Activated CD8-positive, alpha-beta T cell treated with anti-CD3 and anti-CD28 coated beads, Interleukin-2, amount 10 ng/mL, durations not matched to agents 7 days and 5 days (primary cell): ENCODE measurements at regions of chr1 and their contacts with region 1.

Region 1: DNA sequence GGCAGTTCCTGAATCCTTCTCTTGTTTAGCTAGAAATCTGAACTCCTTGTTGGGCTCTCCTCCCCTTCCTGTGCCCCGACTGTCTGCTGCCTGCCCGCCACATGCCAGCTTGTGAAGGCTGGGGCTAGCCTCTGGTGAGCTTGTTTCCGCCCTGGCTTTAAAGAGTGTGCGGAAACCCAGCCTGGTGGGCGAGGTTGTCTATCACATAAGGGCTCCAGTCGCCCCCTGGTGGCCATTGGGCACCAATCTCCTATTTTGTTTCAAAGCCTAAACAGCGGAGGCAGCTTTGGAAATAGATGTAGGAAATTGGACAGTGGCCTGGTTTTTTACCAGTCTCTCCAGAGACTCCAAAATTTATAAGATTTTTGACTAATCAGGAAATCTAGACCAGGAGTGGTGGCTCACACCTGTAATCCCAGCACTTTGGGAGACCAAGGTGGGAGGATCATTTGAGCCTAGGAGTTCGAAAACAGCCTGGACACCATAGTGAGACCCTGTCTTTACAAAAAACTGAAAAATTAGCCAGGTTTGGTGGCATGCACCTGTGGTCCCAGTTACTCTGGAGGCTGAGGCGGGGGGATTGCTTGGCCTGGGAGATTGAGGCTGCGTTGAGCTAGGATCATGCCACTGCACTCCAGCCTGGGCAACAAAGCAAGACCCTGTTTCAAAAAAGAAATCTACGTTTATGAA is 9.8 kb downstream of the ATP8B2 start:
- DNase-seq: peak; percentile 95
- ATAC-seq: peak; percentile 90
- H3K4me3 Mint-ChIP-seq: peak overlapping the region; percentile 47
- H3K27ac Mint-ChIP-seq: peak overlapping the region; percentile 89
- H3K4me1 Mint-ChIP-seq: peaks cover 79% of the 10 kb centered on the region
- H3K27me3 Mint-ChIP-seq: no peaks in the 10 kb centered on the region

Region 2: DNA sequence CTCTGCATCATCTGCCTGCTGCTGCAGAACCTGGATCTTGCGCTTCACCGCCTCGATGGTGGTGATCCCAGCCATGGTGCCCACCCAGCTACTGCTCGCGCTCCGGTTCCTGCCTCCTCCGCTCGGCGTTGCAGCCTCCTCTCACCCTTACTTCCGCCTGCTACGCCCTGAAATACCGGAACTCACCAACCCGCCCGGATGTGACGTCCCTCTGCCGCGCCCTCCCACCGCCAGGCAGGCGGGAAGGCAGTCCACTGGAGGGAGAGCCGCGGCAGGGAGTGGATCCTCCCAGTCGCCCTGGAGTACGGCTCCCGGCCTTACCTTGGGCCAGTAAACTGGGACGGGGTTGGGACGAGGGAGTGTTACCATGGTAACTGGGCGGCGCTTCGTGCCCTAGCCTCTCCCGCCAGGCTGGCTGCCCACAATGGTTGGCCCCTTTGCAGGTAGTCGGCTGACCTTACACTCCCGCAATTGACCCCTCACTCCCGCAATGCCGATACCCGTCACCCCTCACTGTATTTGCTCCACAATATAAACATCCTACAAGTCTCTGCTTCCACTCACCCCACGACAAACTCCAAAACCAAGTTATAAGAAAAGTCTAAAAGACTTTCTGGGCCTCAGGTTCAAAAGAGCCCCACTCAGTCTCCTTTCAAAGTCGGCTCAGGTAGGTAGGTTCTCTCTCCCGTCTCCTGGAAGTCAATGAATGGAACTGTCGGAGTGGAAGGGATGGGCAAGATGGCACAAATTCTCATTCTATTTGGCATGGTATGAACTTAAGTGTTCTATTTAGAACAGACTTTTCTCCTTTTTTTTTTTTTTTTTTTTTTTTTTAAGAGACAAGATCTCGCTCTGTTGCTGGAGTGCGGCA is 151.9 kb before region 1 on chr1:
- CTCF ChIA-PET with region 1: interaction called, 18 read pairs
- POLR2A ChIA-PET with region 1: no interaction called
- DNase-seq: peak; percentile 97
- ATAC-seq: peak; percentile 72
- H3K4me3 Mint-ChIP-seq: peak overlapping the region; percentile 99
- H3K27ac Mint-ChIP-seq: peak overlapping the region; percentile 100
- H3K4me1 Mint-ChIP-seq: peaks cover 43% of the 10 kb centered on the region
- H3K27me3 Mint-ChIP-seq: peaks cover 6% of the 10 kb centered on the region

Region 3: GRCh38 chr1:154220071-154220969 is 114.8 kb before region 1 on chr1 and contains the start of gene UBAP2L:
- CTCF ChIA-PET with region 1: interaction called, 17 read pairs
- POLR2A ChIA-PET with region 1: interaction called, 3 read pairs
- DNase-seq: peak; percentile 99
- ATAC-seq: peak; percentile 88
- H3K4me3 Mint-ChIP-seq: peak within 1 kb of the TSS; percentile 99
- H3K27ac Mint-ChIP-seq: peak within 1 kb of the TSS; percentile 98
- H3K4me1 Mint-ChIP-seq: peaks cover 62% of the 10 kb centered on the region
- H3K27me3 Mint-ChIP-seq: no peaks in the 10 kb centered on the region
- total RNA-seq, gene UBAP2L: 176 to 179 TPM

Region 4: GRCh38 chr1:154272217-154272998 is 62.8 kb before region 1 on chr1 and contains the start of gene HAX1:
- CTCF ChIA-PET with region 1: interaction called, 59 read pairs
- POLR2A ChIA-PET with region 1: interaction called, 4 read pairs
- DNase-seq: peak; percentile 99
- ATAC-seq: peak; percentile 96
- H3K4me3 Mint-ChIP-seq: peak within 1 kb of the TSS; percentile 97
- H3K27ac Mint-ChIP-seq: peak within 1 kb of the TSS; percentile 96
- H3K4me1 Mint-ChIP-seq: peaks cover 41% of the 10 kb centered on the region
- H3K27me3 Mint-ChIP-seq: no peaks in the 10 kb centered on the region
- total RNA-seq, gene HAX1: 110 to 119 TPM

Region 5: GRCh38 chr1:154304664-154305337 is 30.4 kb before region 1 on chr1:
- CTCF ChIA-PET with region 1: interaction called, 10 read pairs
- POLR2A ChIA-PET with region 1: no interaction called
- DNase-seq: no peak
- ATAC-seq: no peak
- H3K4me3 Mint-ChIP-seq: no peak overlapping the region
- H3K27ac Mint-ChIP-seq: no peak overlapping the region
- H3K4me1 Mint-ChIP-seq: no peaks in the 10 kb centered on the region
- H3K27me3 Mint-ChIP-seq: no peaks in the 10 kb centered on the region

Region 6: GRCh38 chr1:154352581-154353459 is 17.6 kb after region 1 on chr1:
- CTCF ChIA-PET with region 1: interaction called, 158 read pairs
- POLR2A ChIA-PET with region 1: no interaction called
- DNase-seq: peak; percentile 49
- ATAC-seq: peak; percentile 73
- H3K4me3 Mint-ChIP-seq: peak overlapping the region; percentile 66
- H3K27ac Mint-ChIP-seq: peak overlapping the region; percentile 45
- H3K4me1 Mint-ChIP-seq: peaks cover 22% of the 10 kb centered on the region
- H3K27me3 Mint-ChIP-seq: peaks cover 23% of the 10 kb centered on the region

Region 7: GRCh38 chr1:154404984-154405761 is 70.0 kb after region 1 on chr1 and contains the start of gene IL6R:
- CTCF ChIA-PET with region 1: interaction called, 17 read pairs
- POLR2A ChIA-PET with region 1: no interaction called
- DNase-seq: peak; percentile 72
- ATAC-seq: peak; percentile 66
- H3K4me3 Mint-ChIP-seq: peak within 1 kb of the TSS; percentile 57
- H3K27ac Mint-ChIP-seq: peak within 1 kb of the TSS; percentile 39
- H3K4me1 Mint-ChIP-seq: peaks cover 78% of the 10 kb centered on the region
- H3K27me3 Mint-ChIP-seq: peaks cover 33% of the 10 kb centered on the region
- total RNA-seq, gene IL6R: 0.16 to 0.53 TPM